CD4-positive, alpha-beta memory T cell (primary cell): ENCODE measurements at regions of chr14 and their contacts with region 1.

Region 1: GRCh38 chr14:67359775-67360648 is at the starts of genes ATP6V1D and EIF2S1:
- DNase-seq: peak; percentile 99 to 100 (median 100)
- H3K4me3 ChIP-seq: peak within 1 kb of the TSS; percentile 88 to 97
- H3K4me3 Mint-ChIP-seq: peak within 1 kb of the TSS; percentile 96 to 100 (median 100)
- H3K27ac ChIP-seq: peak within 1 kb of the TSS; percentile 90
- H3K27ac Mint-ChIP-seq: peak within 1 kb of the TSS; percentile 92 to 100 (median 99)
- H3K4me1 ChIP-seq: peaks cover 72% of the 10 kb centered on the region
- H3K4me1 Mint-ChIP-seq: peaks cover 44 to 93% (median 70%) of the 10 kb centered on the region in 4 donors
- H3K27me3 ChIP-seq: no peaks in the 10 kb centered on the region
- H3K27me3 Mint-ChIP-seq: no peaks in the 10 kb centered on the region
- total RNA-seq, gene ATP6V1D: 26.8 to 35.0 TPM
- total RNA-seq, gene EIF2S1: 62.0 to 72.1 TPM

Region 2: DNA sequence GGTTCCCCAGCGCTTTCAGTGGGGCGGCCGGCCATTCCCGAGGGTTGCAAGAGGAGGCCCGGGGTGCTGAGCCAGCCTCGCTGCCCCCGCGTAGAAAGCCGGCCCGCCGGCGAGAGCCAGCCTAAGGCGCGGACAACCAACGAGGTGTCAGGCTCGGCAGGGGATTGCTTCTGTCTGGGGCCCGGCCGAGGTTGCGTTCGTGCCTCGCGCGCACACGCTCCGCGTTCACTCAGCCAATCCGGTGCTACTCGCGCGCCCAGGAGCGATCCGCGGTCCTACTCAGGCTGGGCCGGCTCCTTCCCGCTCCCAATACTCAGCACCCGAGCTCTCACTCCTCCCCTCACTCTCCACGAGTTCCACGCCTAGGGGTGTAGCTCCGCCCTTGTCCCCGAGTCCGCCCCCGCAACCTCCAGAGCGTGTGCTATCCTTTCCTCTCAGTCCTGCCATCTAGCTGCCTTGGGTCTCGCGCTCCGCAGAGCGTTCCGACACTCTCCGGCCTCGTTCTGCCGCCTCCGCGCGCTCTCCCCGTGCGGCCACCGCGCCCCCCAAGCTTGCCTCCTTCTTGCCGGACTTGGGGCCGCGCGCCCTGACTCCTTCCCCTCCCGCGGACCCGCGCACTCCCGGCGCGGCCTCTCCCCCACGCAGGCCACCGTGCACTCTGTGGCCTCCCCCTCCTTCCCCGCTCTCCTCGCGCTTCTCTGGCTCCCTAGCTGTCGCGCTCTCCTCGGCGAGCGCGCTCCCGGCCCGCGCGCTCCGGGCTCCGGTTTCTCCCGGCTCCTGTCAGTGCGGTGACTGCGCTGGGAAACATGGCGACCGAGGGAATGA is 852.1 kb before region 1 on chr14 and contains the start of gene GPHN:
- CTCF ChIA-PET with region 1: interaction called, 5 read pairs
- POLR2A ChIA-PET with region 1: interaction called, 10 read pairs
- intact Hi-C with region 1: loop called (anchors 1 kb)
- DNase-seq: peak; percentile 85 to 92 (median 89)
- H3K4me3 ChIP-seq: peak within 1 kb of the TSS; percentile 48 to 79
- H3K4me3 Mint-ChIP-seq: peak within 1 kb of the TSS; percentile 98 to 100 (median 99)
- H3K27ac ChIP-seq: peak within 1 kb of the TSS; percentile 73
- H3K27ac Mint-ChIP-seq: peak within 1 kb of the TSS; percentile 92 to 98 (median 95)
- H3K4me1 ChIP-seq: peaks cover 40% of the 10 kb centered on the region
- H3K4me1 Mint-ChIP-seq: peaks cover 18 to 53% (median 32%) of the 10 kb centered on the region in 4 donors
- H3K27me3 ChIP-seq: no peaks in the 10 kb centered on the region
- H3K27me3 Mint-ChIP-seq: no peaks in the 10 kb centered on the region
- total RNA-seq, gene GPHN: 15.5 to 18.8 TPM

Region 3: GRCh38 chr14:67240978-67241414 is 119.0 kb before region 1 on chr14:
- CTCF ChIA-PET with region 1: interaction called, 4 read pairs
- POLR2A ChIA-PET with region 1: interaction called, 14 read pairs
- intact Hi-C with region 1: loop called (anchors 1 kb)
- DNase-seq: peak; percentile 90 to 92 (median 91)
- H3K4me3 ChIP-seq: peak overlapping the region; percentile 73 to 90
- H3K4me3 Mint-ChIP-seq: peak overlapping the region; percentile 81 to 94 (median 92)
- H3K27ac ChIP-seq: peak overlapping the region; percentile 61
- H3K27ac Mint-ChIP-seq: peak overlapping the region; percentile 83 to 93 (median 88)
- H3K4me1 ChIP-seq: peaks cover 17% of the 10 kb centered on the region
- H3K4me1 Mint-ChIP-seq: peaks cover 7 to 32% (median 18%) of the 10 kb centered on the region in 4 donors
- H3K27me3 ChIP-seq: no peaks in the 10 kb centered on the region
- H3K27me3 Mint-ChIP-seq: no peaks in the 10 kb centered on the region

Region 4: DNA sequence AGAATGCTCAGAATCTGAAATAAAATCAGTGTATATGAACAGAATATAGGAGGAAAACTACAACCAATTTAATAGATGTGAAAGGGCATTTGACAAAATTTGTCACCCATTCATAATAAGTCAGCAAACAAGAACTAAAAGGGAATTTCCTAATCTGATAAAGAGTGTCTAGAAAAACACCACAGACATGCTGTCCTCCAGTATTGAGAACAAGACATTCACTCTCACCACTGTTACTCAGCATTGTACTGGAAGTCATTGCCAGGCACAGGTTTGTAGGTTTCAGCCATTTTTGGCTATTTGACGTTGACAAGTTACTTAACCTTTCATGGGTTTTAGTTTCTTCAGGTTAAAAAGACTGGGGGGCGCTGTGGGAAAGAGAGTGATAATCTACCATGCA is 13.3 kb after region 1 on chr14:
- CTCF ChIA-PET with region 1: interaction called, 15 read pairs
- POLR2A ChIA-PET with region 1: no interaction called
- intact Hi-C with region 1: no loop called
- DNase-seq: no peak
- H3K4me3 ChIP-seq: no peak overlapping the region
- H3K4me3 Mint-ChIP-seq: no peak overlapping the region
- H3K27ac ChIP-seq: no peak overlapping the region
- H3K27ac Mint-ChIP-seq: peak overlapping the region in 3 of 7 donors; percentile 35 to 72 (median 40)
- H3K4me1 ChIP-seq: no peaks in the 10 kb centered on the region
- H3K4me1 Mint-ChIP-seq: peaks cover 13 to 31% (median 23%) of the 10 kb centered on the region in 4 donors
- H3K27me3 ChIP-seq: no peaks in the 10 kb centered on the region
- H3K27me3 Mint-ChIP-seq: no peaks in the 10 kb centered on the region

Region 5: GRCh38 chr14:67411820-67412421 is 51.9 kb after region 1 on chr14 and contains the start of gene PLEK2:
- CTCF ChIA-PET with region 1: interaction called, 11 read pairs
- POLR2A ChIA-PET with region 1: interaction called, 12 read pairs
- intact Hi-C with region 1: no loop called
- DNase-seq: peak; percentile 60 to 68 (median 64)
- H3K4me3 ChIP-seq: peak within 1 kb of the TSS; percentile 23 to 47
- H3K4me3 Mint-ChIP-seq: peak within 1 kb of the TSS; percentile 72 to 86 (median 78)
- H3K27ac ChIP-seq: no peak within 1 kb of the TSS
- H3K27ac Mint-ChIP-seq: peak within 1 kb of the TSS in 4 of 7 donors; percentile 32 to 78 (median 58)
- H3K4me1 ChIP-seq: no peaks in the 10 kb centered on the region
- H3K4me1 Mint-ChIP-seq: peaks cover 2 to 12% (median 5%) of the 10 kb centered on the region in 4 donors
- H3K27me3 ChIP-seq: no peaks in the 10 kb centered on the region
- H3K27me3 Mint-ChIP-seq: peaks cover 0 to 2% of the 10 kb centered on the region in 2 donors
- total RNA-seq, gene PLEK2: 1.9 to 4.1 TPM

Region 6: DNA sequence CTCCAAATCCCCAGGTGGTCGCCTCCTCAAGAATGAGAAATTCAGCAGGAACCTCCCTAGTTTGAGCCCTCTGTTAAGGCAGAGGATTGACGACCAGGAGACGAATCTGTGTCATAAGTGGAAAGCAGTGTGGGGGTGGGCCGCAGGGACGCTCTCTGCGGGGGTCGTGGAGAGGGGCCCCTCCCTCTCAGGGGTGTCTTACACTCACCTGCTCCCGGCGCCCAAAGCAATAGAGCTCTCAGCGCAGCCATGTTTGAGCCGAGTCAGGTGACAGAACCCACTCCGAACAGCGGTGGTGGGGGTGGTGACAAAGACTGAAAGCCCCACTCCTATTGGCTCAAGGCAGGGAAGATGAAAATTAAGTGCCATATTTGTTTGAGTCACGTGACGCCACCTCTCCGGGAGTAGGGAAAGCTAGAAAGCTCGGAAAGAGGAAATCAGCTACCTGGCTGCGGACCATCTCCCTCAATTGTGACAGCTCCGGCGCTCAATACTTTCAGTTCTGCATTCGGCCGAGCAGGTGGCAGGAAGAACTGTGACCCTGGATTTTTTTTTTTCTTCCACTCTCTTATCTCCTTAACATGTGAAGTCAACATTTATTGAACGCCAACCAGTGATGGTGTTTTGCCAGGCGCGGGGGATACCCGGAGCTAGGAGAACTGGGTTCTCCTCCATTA is 456.5 kb after region 1 on chr14 and contains the start of gene ZFYVE26:
- CTCF ChIA-PET with region 1: no interaction called
- POLR2A ChIA-PET with region 1: interaction called, 7 read pairs
- intact Hi-C with region 1: loop called (anchors 2 kb)
- DNase-seq: peak; percentile 87 to 95 (median 88)
- H3K4me3 ChIP-seq: peak within 1 kb of the TSS; percentile 54 to 86
- H3K4me3 Mint-ChIP-seq: peak within 1 kb of the TSS; percentile 89 to 99 (median 96)
- H3K27ac ChIP-seq: peak within 1 kb of the TSS; percentile 47
- H3K27ac Mint-ChIP-seq: peak within 1 kb of the TSS; percentile 86 to 98 (median 96)
- H3K4me1 ChIP-seq: peaks cover 38% of the 10 kb centered on the region
- H3K4me1 Mint-ChIP-seq: peaks cover 39 to 61% (median 46%) of the 10 kb centered on the region in 4 donors
- H3K27me3 ChIP-seq: no peaks in the 10 kb centered on the region
- H3K27me3 Mint-ChIP-seq: no peaks in the 10 kb centered on the region
- total RNA-seq, gene ZFYVE26: 35.2 to 38.1 TPM

Region 7: DNA sequence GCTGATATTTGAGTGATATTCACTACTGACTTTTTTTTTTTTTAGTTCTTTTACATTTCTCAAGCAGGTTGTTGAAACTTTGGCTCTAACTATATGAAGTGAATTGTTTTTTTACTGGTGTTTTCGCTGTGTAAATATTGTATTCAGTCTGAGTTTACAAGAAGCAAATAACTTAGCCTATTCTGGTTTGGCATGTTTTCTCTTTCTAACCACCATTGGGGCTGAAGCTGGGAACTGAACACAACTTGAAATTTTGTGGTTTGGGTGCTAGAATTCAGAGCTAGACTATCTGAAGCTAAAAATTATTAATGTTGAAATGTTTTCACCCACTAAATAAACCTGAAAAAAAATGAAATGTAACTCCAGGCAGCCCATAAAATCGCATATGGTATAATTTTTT is 496.8 kb after region 1 on chr14:
- CTCF ChIA-PET with region 1: no interaction called
- POLR2A ChIA-PET with region 1: no interaction called
- intact Hi-C with region 1: no loop called
- DNase-seq: no peak
- H3K4me3 ChIP-seq: no peak overlapping the region
- H3K4me3 Mint-ChIP-seq: no peak overlapping the region
- H3K27ac ChIP-seq: no peak overlapping the region
- H3K27ac Mint-ChIP-seq: no peak overlapping the region
- H3K4me1 ChIP-seq: no peaks in the 10 kb centered on the region
- H3K4me1 Mint-ChIP-seq: peaks cover 0 to 4% (median 0%) of the 10 kb centered on the region in 4 donors
- H3K27me3 ChIP-seq: no peaks in the 10 kb centered on the region
- H3K27me3 Mint-ChIP-seq: no peaks in the 10 kb centered on the region